ENCODE measurements at regions of chr15 and their contacts with region 1.

Region 1: GRCh38 chr15:66619151-66619903 is 53.5 kb upstream of the LCTL start:
- DNase-seq: peak; percentile 78
- CTCF ChIP-seq: peak; percentile 72

Region 2: DNA sequence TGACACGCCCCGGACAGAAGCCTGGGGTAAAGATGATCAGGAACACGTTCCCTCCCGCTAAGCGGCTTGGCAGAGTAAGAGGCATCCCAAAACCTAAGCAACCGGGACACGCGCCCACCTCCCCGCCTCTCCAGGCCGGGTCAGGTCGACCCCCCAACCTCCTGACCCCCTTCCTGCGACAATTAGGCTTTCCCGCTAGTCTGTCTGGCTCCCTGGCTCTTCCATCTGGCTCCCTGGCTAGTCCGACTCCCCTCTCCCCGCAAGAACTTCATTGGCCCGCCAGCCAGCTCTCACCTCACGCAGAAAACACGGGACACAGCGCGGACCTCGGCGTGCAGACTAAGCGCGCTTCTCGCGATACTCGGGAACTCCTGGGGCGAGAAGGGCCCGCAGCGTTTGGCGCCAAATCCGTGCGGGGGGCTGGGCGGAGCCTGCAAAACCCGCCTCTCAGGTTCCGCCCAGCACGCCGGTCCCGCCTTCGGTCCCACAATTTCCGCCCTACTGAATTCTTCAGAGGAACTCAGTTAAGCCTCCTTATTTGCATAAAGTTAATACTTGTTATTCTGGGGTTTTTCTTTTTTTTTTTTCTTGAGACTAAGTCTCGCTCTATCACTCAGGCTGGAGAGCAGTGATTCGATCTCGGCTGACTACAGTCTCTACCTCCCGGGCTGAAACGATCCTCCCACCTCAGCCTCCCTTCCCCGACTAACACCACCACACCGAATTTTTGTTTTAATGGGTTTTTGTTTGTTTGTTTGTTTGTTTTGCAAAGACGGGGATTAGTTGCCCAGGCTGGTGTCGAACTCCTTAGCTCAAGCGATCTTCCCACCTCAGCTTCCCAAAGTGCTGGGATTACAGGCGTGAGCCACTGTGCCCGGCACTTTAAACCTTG is 262.7 kb before region 1 on chr15 and contains the start of gene TIPIN:
- CTCF ChIA-PET with region 1: no interaction called
- POLR2A ChIA-PET with region 1: no interaction called
- DNase-seq: peak; percentile 97
- CTCF ChIP-seq: no peak

Region 3: DNA sequence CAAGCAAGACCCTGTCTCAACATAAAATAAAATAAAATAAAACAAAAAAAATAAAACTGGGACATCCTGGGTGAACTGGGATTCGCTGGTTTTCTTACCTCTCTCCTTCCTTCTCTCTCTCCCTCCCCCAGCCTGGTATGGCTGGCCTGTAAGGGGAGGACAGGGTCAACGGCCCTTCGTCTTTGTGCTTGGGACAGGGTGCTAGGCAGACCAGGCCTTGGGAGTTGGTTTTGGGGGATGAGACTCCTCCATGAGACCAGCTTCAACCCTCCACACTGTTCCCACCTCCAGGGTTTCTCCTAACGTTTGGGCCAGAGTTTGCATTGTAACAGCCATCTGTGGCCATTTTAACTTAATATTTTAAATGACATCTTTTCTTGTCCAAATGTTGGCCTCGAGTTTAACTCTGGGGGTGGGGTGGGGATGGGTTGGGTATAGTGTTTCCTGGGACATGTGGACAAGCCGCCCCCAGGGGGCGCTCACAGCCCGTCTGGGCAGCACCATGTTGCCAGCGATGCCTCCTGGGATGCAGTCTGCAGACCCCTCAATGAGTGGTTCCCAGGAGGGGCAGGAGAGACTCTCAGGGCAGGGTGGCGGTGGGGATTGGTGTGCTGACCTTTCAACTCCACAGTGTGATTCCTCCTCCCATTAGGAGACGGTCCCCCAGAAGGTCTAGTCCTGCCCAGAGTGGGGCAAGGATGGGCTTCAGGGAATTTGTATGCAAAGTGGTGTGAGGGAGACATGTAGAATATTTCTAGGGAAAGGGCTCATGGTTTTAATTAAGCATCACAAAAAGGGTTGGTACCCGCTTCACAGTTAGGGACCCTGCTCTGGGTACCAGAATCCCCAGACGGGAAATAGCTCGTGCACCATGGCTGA is 15.8 kb before region 1 on chr15:
- CTCF ChIA-PET with region 1: interaction called, 21 read pairs
- POLR2A ChIA-PET with region 1: no interaction called
- DNase-seq: peak; percentile 79
- CTCF ChIP-seq: peak; percentile 65

Region 4: DNA sequence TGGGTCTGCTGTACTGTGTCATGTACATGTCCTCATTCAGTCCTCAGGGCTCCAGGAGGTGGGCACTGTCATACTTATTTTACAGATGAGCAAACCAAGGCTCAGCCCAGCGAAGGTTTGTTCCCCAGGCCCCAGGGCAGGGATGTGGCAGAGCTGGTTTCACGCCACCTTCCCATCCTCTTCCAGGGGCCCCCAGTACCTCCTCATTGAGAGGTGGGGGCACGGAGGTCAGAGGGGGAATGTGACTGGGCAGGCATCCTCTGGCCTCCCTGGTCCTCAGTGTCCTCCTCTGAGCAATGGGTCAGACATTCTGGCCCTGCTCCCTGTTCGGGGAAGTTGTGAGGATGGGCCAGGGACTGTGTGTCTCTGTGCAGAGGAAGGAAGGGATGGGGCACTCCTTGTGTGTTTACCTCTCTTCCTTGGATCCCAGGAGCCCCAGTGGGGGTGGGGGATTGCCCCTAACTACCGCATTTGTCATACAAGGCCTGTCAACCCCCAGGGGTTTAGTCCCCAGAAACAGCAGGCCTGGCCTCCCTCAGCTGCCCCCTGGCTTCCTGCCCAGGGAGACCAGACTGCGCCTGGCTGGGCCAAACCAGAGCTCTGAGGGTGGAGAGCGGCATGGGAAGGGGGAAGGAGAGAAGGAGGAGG is 12.4 kb after region 1 on chr15:
- CTCF ChIA-PET with region 1: interaction called, 11 read pairs
- POLR2A ChIA-PET with region 1: no interaction called
- DNase-seq: no peak
- CTCF ChIP-seq: no peak

Region 5: GRCh38 chr15:66774001-66774814 is 154.9 kb after region 1 on chr15:
- CTCF ChIA-PET with region 1: interaction called, 36 read pairs
- POLR2A ChIA-PET with region 1: no interaction called
- DNase-seq: peak; percentile 80
- CTCF ChIP-seq: peak; percentile 58

Region 6: DNA sequence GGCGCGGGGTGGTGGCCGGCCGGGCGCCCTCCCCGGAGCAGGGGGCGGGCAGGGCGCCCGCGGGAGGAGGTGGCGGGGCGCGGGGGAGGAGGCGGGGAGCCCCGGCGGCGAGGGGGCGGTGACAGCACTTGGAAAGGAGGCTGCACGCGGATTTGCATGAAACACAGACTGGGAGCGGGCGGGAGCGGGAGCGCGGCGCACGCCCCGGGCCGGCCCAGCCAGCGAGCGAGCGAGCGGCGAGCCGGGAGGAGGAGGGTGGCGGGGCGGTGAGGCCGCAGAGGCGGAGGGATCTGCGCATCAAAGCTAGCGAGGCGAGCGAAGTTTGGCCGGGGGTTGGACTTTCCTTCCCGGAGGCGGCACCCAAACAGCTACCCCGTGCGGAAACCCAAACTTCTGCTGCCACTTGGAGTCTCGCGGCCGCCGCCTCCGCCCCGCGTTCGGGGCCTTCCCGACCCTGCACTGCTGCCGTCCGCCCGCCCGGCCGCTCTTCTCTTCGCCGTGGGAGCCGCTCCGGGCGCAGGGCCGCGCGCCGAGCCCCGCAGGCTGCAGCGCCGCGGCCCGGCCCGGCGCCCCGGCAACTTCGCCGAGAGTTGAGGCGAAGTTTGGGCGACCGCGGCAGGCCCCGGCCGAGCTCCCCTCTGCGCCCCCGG is 446.2 kb after region 1 on chr15 and contains the start of gene SMAD3:
- CTCF ChIA-PET with region 1: no interaction called
- POLR2A ChIA-PET with region 1: no interaction called
- DNase-seq: peak; percentile 85
- CTCF ChIP-seq: no peak

Measured in GM10248 (cell line).